CD14-positive monocyte (primary cell): ENCODE measurements at regions of chr12 and their contacts with region 1.

Region 1: DNA sequence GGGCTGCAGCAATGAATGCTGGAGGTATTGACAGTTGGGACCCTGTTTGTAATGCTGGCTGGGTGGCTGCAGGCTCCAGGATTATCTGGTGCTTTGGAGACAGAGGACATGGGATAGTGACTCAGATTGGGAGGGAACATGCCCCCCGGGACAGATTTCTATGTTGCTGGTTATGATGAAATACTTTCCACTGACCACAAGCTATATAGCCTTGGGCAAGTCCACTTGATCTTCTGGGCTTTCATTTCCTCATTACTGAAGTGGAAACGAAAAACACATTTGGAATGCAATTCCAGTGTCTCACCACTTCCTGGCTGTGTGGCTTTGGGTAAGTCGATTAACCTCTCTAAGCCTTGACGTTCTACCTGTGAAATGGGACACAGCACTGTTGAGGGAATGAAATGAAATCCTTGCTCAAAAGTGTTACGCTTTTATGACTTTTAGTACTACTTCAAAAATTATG is 6.3 kb upstream of the TPCN1 start:
- DNase-seq: peak; percentile 92 to 99 (median 98)
- H3K4me3 ChIP-seq: peak overlapping the region in 1 of 3 experiments; percentile 48
- H3K4me3 Mint-ChIP-seq: peak overlapping the region; percentile 56 to 86
- H3K27ac ChIP-seq: peak overlapping the region; percentile 58 to 87
- H3K27ac Mint-ChIP-seq: peak overlapping the region; percentile 96 to 99 (median 98)
- H3K4me1 ChIP-seq: peaks cover 79 to 82% of the 10 kb centered on the region in 2 donors
- H3K4me1 Mint-ChIP-seq: peaks cover 71% of the 10 kb centered on the region
- H3K27me3 ChIP-seq: no peaks in the 10 kb centered on the region
- H3K27me3 Mint-ChIP-seq: no peaks in the 10 kb centered on the region
- CTCF ChIP-seq: peak; percentile 45

Region 2: DNA sequence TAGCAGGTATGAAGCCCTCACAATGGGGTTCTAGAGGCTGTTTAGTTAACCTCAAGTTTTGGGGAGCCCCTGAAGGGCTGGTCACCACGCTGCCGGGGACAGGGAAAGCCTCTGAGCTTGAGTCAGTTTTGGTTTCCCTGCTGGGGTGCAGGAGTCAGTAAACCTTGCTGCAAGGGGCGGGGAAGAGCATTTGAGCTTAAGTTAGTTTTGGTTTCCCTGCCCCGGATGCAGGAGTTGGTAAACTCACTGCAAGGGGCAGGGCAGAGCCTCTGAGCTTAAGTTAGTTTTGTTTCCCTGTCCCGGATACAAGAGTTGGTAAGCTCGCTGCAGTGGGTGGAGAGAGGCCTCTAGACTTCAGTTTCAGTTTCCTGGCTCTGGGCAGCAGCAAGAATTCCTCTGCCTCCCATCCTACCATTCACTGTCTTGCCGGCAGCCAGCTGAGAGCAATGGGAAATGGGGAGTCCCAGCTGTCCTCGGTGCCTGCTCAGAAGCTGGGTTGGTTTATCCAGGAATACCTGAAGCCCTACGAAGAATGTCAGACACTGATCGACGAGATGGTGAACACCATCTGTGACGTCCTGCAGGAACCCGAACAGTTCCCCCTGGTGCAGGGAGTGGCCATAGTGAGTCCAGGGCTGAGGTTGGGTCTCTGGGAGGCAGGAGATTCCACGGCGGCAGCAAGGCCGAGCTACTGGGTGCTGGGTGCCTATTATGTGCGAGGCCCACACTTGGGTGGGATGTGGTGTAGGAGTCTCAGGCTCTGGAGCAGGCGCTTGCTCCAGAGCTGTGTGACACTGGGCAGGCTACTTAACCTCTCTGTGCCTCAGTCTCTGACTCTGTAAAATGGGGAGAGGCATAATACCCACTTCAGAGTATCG is 236.6 kb before region 1 on chr12 and contains the start of gene OAS2:
- intact Hi-C with region 1: no loop called
- DNase-seq: peak; percentile 77 to 84 (median 82)
- H3K4me3 ChIP-seq: peak within 1 kb of the TSS; percentile 76 to 87 (median 85)
- H3K4me3 Mint-ChIP-seq: peak within 1 kb of the TSS; percentile 96 to 98
- H3K27ac ChIP-seq: peak within 1 kb of the TSS; percentile 92 to 95
- H3K27ac Mint-ChIP-seq: peak within 1 kb of the TSS; percentile 98 to 99 (median 99)
- H3K4me1 ChIP-seq: peaks cover 34 to 49% of the 10 kb centered on the region in 2 donors
- H3K4me1 Mint-ChIP-seq: peaks cover 48% of the 10 kb centered on the region
- H3K27me3 ChIP-seq: no peaks in the 10 kb centered on the region
- H3K27me3 Mint-ChIP-seq: no peaks in the 10 kb centered on the region
- CTCF ChIP-seq: no peak
- polyA plus RNA-seq, gene OAS2: 27.7 to 55.9 (median 40.1) TPM

Region 3: DNA sequence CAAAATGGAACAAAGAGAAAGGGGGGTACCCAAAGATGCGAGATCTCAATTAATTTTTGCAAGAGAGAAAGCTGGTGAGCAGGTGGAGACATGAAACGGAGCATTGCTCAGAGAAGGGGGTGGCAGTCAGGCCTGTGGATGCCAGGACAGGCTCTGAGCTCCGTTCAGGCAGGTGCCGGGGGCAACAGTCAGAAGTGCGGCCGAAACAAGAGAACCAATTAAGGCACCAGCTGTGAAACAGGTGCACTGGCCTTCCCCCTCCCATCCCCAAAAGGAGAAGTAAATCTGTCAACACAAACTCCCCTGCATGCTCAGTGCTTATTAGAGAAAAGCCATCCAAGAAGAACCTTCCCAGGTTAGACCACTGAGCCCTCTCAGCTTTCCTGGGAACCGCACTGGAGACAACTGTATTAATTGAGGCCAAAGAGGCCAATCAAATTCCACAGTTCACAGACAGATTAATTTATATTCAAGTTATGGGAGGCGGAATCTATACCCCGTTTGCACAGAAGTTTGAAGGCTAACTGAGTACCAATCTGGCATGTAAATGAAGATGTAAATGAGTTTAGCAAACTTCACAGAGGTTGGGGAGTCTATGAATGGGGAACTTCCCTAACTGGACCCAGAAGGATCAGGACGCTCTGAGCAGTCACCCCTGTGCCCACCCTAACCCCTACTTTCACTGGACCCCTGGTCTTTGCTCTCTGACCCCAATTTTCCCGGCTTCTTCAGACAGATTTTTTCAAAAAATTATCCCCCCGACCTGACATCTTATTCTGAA is 215.8 kb before region 1 on chr12:
- intact Hi-C with region 1: no loop called
- DNase-seq: no peak
- H3K4me3 ChIP-seq: no peak overlapping the region
- H3K4me3 Mint-ChIP-seq: no peak overlapping the region
- H3K27ac ChIP-seq: no peak overlapping the region
- H3K27ac Mint-ChIP-seq: no peak overlapping the region
- H3K4me1 ChIP-seq: no peaks in the 10 kb centered on the region
- H3K4me1 Mint-ChIP-seq: no peaks in the 10 kb centered on the region
- H3K27me3 ChIP-seq: no peaks in the 10 kb centered on the region
- H3K27me3 Mint-ChIP-seq: no peaks in the 10 kb centered on the region
- CTCF ChIP-seq: no peak

Region 4: DNA sequence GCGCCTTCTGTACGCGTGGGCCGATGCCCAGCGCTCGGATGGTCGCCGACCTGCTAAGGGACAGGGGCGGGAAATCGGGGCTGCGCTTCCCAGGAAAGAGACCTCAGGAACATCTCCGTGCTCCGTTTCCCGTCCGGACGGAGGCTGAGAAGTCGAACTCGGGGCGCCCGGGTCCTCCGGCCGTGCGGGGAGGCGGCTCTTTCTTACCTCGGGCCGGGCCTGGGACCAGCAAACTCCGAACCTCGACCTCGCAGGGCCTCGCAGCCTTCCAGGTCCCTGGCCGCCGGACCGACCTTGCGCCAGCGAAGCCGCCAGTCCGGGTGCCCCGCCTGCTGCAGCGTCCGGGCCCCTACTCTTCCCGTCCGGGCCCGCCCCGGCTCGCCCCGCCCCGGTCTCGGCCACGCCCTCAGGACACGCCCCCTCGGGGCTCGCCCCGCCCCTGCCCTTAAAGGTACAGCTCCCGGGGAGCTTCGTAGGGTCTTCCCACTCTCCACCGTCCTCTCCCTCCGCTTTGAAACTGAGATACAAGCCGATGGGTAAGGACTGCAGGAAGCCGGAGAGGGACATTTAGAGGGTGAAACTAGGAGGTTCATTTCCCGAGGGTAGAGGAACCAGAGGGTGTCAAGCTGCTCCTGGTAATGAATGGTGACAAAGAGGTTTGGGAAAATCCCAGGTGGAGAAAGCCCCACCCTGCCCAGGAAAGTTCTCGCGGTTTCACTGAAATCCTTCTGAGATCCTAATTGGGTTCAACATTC is 120.0 kb after region 1 on chr12 and contains the start of gene SLC8B1:
- intact Hi-C with region 1: loop called in 1 of 2 experiments (anchors 10 kb)
- DNase-seq: peak; percentile 68 to 86 (median 79)
- H3K4me3 ChIP-seq: peak within 1 kb of the TSS; percentile 74 to 93 (median 75)
- H3K4me3 Mint-ChIP-seq: peak within 1 kb of the TSS; percentile 96 to 98
- H3K27ac ChIP-seq: peak within 1 kb of the TSS; percentile 72 to 88
- H3K27ac Mint-ChIP-seq: peak within 1 kb of the TSS; percentile 90 to 98 (median 93)
- H3K4me1 ChIP-seq: peaks cover 28 to 44% of the 10 kb centered on the region in 2 donors
- H3K4me1 Mint-ChIP-seq: peaks cover 43% of the 10 kb centered on the region
- H3K27me3 ChIP-seq: no peaks in the 10 kb centered on the region
- H3K27me3 Mint-ChIP-seq: peaks cover 0 to 2% (median 0%) of the 10 kb centered on the region in 3 donors
- CTCF ChIP-seq: no peak
- polyA plus RNA-seq, gene SLC8B1: 21.6 to 46.0 (median 32.4) TPM